Right cardiac atrium (tissue), 5 donors: ENCODE measurements at regions of chr13 and their contacts with region 1.

Region 1: DNA sequence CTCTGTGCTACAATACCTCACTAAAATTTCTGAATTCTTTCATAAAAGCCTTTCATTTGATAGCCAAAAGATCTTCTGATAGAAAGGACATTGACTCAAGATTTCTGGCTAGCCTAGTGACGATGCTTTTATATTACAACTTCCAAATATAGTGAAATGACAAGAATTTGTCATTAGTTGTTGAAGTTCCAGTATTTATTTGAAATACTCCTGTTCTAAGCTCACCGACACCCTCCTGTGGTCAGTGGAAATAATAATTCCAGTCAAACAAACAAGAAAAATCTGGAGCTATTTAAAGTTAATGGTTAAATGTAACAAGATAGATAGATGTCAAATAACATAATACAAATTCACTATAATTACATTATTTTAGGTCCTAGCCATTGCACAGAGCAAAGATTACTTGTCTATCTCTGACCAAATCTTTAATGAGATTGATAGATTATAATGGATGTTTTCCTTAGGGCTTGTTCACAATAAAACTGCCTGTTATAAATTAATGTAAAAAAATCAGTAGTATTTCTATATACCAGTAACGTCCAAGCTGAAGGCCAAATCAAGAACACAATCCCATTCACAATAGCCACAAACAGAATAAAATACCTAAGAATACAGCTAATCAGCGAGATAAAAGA is 195.5 kb downstream of the RGCC start:
- DNase-seq: no peak
- ATAC-seq: no peak
- H3K4me3 ChIP-seq: no peak overlapping the region
- H3K27ac ChIP-seq: no peak overlapping the region
- H3K4me1 ChIP-seq: peaks cover 3% of the 10 kb centered on the region
- H3K27me3 ChIP-seq: no peaks in the 10 kb centered on the region

Region 2: GRCh38 chr13:41352935-41353840 is 299.7 kb before region 1 on chr13:
- intact Hi-C with region 1: loop called in 1 of 4 experiments (anchors 10 kb)
- DNase-seq: no peak
- ATAC-seq: no peak
- H3K4me3 ChIP-seq: no peak overlapping the region
- H3K27ac ChIP-seq: no peak overlapping the region
- H3K4me1 ChIP-seq: no peaks in the 10 kb centered on the region
- H3K27me3 ChIP-seq: no peaks in the 10 kb centered on the region

Region 3: DNA sequence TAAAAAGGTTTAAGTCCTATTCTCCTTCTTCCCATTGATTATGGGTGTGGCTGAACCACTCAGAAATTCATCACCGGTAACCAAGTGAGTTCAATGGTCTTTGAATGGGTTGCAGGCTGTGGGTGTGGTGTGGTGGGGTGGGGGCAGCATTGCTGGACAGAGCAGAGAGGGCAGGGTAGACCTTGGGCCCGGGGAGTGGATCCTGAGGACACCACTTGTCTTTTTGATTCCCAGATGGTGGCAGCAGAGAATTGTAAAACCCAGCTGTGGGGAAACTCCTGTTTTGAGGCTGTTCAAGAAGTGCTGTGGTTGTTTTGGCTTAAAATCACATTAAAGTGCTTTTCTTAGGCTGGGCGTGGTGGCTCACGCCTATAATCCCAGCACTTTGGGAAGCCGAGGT is 241.3 kb before region 1 on chr13:
- intact Hi-C with region 1: loop called in 2 of 4 experiments (anchors 5 kb)
- DNase-seq: no peak
- ATAC-seq: peak; percentile 52 to 54
- H3K4me3 ChIP-seq: no peak overlapping the region
- H3K27ac ChIP-seq: no peak overlapping the region
- H3K4me1 ChIP-seq: no peaks in the 10 kb centered on the region
- H3K27me3 ChIP-seq: no peaks in the 10 kb centered on the region